H1 (cell line): ENCODE measurements at regions of chr1 and their contacts with region 1.

Region 1: DNA sequence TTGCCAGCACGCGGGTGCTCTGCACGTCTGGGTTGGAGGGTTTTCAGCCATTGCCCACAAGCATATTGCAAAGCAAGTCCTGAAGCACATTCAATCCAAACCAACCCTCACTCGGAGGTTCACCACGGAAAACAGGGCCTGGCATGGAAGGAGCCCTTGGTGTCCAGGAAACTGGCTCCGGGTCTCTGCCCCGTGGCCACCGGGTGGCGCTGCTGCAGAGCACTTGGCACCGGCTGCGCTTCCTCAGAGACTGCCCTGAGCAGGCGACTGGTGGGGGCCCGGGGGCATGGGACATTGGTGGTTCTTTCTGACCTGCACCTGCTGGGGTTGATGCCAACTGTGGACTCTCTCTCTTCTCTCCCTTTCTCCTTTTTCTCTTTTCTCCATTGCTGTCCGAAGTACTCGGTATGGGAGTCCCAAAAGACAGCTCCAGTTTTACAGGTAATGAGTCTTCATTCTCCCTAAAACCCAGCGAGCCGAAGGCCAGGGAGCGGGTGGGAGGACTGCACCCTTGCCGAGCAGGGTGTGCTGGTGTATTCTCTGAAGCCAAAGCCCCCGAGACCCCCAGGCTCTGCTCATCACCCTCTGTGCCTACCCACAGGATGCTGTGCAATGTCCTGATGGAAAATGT is 4.1 kb upstream of the KCNAB2 start:
- DNase-seq: peak in 1 of 2 experiments; percentile 92
- H3K4me3 ChIP-seq: no peak overlapping the region
- H3K27ac ChIP-seq: no peak overlapping the region
- H3K4me1 ChIP-seq: peaks cover 0 to 5% (median 3%) of the 10 kb centered on the region in 4 experiments; a peak in 3 of 7 replicates
- H3K27me3 ChIP-seq: no peaks in the 10 kb centered on the region; a peak in 1 of 7 replicates
- CTCF ChIP-seq: peak in 2 of 3 experiments; percentile 94 to 96; a peak in 3 of 4 replicates
- EP300 ChIP-seq: no peak
- POLR2A ChIP-seq: no peak
- RAD21 ChIP-seq: peak; percentile 88 to 92

Region 2: GRCh38 chr1:6059866-6060265 is 18.3 kb after region 1 on chr1:
- CTCF ChIA-PET with region 1: interaction called, 20 read pairs
- POLR2A ChIA-PET with region 1: no interaction called
- DNase-seq: no peak
- H3K4me3 ChIP-seq: no peak overlapping the region
- H3K27ac ChIP-seq: no peak overlapping the region
- H3K4me1 ChIP-seq: no peaks in the 10 kb centered on the region
- H3K27me3 ChIP-seq: no peaks in the 10 kb centered on the region
- CTCF ChIP-seq: no peak
- EP300 ChIP-seq: no peak
- POLR2A ChIP-seq: no peak
- RAD21 ChIP-seq: no peak